ENCODE measurements at regions of chr3 and their contacts with region 1.

Region 1: DNA sequence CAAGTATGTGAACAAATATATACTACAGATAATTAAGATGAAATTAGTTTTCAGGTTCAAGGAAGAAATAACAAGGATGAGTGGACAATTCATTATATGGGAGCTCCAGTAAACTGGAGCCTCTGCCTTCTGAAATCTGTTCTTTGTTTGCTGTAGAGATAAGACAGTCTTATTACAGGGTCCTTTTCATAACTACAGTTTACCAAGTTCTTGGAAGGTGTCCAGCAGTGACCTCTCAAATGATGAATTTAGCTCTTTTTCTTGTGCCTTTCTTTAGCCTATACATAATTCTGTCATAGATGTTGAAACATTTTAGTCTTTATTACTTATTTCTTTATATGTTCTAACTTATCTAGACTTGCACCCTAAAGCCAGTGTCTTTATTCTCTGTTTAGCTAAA is 89.7 kb upstream of the GBE1 start:
- DNase-seq: no peak
- H3K4me3 ChIP-seq: no peak overlapping the region
- H3K4me3 Mint-ChIP-seq: no peak overlapping the region
- H3K27ac Mint-ChIP-seq: no peak overlapping the region
- H3K4me1 ChIP-seq: no peaks in the 10 kb centered on the region
- H3K4me1 Mint-ChIP-seq: no peaks in the 10 kb centered on the region
- H3K27me3 ChIP-seq: no peaks in the 10 kb centered on the region
- H3K27me3 Mint-ChIP-seq: no peaks in the 10 kb centered on the region
- CTCF ChIP-seq: no peak

Region 2: DNA sequence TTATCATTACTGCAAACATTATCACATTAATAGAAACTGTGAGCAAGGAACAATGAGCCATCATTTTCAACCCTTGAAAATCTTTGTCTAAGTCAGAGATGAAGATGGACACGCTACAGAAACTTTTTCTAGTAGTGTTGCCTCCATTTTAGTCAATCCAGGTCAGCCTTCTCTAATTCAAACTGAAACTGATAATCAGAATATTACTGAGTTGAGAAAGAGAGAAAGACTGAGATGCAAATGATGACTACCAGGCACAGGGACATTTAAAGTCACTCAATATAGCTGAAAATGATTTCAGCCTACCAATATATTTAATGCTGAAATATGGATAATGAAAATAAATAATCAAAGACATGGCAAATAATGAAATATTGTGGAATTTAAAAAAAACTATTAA is 351.1 kb before region 1 on chr3:
- CTCF ChIA-PET with region 1: no interaction called
- POLR2A ChIA-PET with region 1: no interaction called
- intact Hi-C with region 1: no loop called
- DNase-seq: no peak
- H3K4me3 ChIP-seq: no peak overlapping the region
- H3K4me3 Mint-ChIP-seq: no peak overlapping the region
- H3K27ac Mint-ChIP-seq: no peak overlapping the region
- H3K4me1 ChIP-seq: peaks cover 9% of the 10 kb centered on the region
- H3K4me1 Mint-ChIP-seq: no peaks in the 10 kb centered on the region
- H3K27me3 ChIP-seq: no peaks in the 10 kb centered on the region
- H3K27me3 Mint-ChIP-seq: no peaks in the 10 kb centered on the region
- CTCF ChIP-seq: no peak

Region 3: DNA sequence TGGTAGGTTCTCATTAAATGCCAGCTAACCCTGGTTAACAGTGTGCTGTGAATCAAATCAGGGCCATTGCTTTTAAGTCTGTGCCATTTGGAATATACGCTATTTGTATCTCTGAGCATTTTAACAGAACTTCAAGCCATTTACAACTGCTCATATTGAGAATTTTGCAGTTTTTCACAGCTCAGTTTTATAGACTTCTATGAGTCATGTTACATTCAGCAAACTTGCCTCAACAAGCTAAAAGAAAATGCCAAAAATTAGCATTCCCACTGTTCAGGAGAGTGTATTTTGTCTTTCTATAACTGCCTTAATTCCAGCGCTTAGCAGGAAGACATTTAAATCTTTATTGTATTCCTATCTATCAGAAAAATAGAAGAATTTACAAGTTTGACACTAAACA is 286.1 kb before region 1 on chr3:
- CTCF ChIA-PET with region 1: no interaction called
- POLR2A ChIA-PET with region 1: no interaction called
- intact Hi-C with region 1: no loop called
- DNase-seq: no peak
- H3K4me3 ChIP-seq: no peak overlapping the region
- H3K4me3 Mint-ChIP-seq: no peak overlapping the region
- H3K27ac Mint-ChIP-seq: no peak overlapping the region
- H3K4me1 ChIP-seq: no peaks in the 10 kb centered on the region
- H3K4me1 Mint-ChIP-seq: no peaks in the 10 kb centered on the region
- H3K27me3 ChIP-seq: no peaks in the 10 kb centered on the region
- H3K27me3 Mint-ChIP-seq: no peaks in the 10 kb centered on the region
- CTCF ChIP-seq: no peak

Region 4: DNA sequence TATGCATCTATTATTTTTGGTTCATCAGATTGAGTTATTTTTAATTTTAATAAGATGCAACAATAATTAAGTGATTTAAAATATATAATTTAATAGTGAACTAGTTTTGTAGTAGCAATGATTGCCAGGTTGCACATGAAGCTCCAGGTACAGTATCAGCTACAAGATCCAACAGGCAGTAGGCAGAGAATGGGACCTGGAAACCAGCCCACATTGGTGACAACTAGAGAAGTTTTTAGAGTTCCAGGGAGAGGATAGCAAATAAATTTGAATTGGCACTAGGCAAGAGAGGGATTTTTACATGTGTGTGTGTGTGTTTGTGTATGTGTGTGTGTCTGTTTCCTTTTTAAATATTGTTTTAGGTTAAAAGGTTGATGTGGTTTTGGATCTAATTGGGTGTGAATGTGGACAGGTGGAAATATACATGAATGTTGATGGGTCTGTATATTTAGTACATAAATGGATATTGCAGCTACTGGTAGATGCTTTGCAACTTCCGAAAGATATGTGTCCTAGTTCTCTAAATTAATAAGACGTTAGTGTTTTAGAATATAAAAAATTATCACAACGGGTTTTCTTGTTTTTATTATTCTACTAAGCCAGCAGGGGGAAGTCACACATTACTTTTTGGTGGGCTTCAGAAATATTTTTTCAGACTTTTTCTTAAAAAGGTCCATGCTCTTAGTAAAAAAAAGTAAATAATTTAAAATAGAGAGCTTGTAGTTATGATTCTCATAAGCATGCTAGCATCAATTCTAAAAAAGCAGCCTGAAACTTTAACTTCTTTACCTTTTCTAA is 20.4 kb after region 1 on chr3:
- CTCF ChIA-PET with region 1: no interaction called
- POLR2A ChIA-PET with region 1: interaction called, 10 read pairs
- intact Hi-C with region 1: no loop called
- DNase-seq: no peak
- H3K4me3 ChIP-seq: no peak overlapping the region
- H3K4me3 Mint-ChIP-seq: no peak overlapping the region
- H3K27ac Mint-ChIP-seq: no peak overlapping the region
- H3K4me1 ChIP-seq: no peaks in the 10 kb centered on the region
- H3K4me1 Mint-ChIP-seq: no peaks in the 10 kb centered on the region
- H3K27me3 ChIP-seq: no peaks in the 10 kb centered on the region
- H3K27me3 Mint-ChIP-seq: peaks cover 7% of the 10 kb centered on the region
- CTCF ChIP-seq: no peak

Measured in Caco-2 (cell line).